GM23248 (cell line): ENCODE measurements at regions of chr7 and their contacts with region 1.

Region 1: GRCh38 chr7:85023045-85023712 is 163.7 kb downstream of the SEMA3D start:
- DNase-seq: peak; percentile 65
- H3K4me3 ChIP-seq: no peak overlapping the region
- H3K27ac ChIP-seq: no peak overlapping the region
- H3K4me1 ChIP-seq: no peaks in the 10 kb centered on the region
- H3K27me3 ChIP-seq: no peaks in the 10 kb centered on the region

Region 2: DNA sequence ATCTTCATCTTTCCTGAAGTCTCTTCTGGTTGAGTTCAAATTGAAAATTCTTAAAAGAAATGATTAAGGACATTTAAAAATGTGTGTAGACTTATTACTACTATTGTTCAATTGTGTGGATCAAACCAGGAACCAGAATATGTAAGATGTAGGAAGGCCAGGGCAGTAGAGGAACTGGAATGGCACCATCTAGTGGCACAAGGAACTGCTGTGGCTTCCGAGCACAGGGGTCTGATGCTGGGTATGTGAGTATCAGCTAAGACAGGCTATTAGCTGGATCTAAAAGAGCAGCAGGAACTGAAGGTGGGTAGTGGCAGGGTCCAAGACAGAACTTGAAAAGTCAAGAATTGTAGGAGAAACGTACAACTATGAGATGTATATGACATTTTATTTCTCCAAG is 1075.9 kb before region 1 on chr7:
- in situ Hi-C with region 1: loop called (anchors 10 kb)
- DNase-seq: peak; percentile 22
- H3K4me3 ChIP-seq: no peak overlapping the region
- H3K27ac ChIP-seq: no peak overlapping the region
- H3K4me1 ChIP-seq: no peaks in the 10 kb centered on the region
- H3K27me3 ChIP-seq: no peaks in the 10 kb centered on the region

Region 3: DNA sequence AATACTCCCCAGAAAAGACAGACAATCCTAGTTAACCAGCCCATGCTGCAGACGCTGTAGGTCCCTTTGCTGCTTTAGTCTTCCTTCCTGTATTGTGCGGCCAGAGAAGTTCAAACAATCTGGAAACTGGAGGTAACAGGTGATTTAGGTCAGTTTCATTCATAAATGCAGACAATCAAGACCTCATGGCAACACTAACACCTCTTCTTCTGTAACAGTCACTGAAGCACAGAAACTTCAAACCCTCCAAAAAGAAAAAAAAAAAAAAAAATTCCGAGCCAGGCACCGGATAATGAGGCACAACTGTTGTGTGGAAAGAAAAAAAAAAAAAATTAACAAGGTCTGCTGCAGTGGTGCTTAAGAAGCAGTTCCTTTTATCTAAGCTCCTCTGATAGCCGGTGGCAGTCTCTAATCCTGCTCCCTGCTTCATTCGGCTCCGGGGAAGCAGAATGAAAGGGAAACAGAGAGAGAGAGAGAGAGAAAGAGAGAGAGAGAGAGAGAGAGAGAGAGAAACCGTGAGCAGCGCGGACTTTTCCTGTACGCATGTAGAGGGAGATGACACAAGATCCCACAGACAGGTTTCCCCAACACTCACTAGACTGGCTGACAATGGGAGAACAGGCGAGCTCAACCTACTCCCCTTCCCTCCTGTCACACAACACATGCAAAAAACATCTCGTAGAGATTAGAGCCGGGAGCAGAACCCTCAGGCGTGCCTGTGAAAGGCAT is 828.5 kb before region 1 on chr7 and contains the start of gene SEMA3A:
- in situ Hi-C with region 1: loop called (anchors 10 kb)
- DNase-seq: peak; percentile 84
- H3K4me3 ChIP-seq: peak within 1 kb of the TSS; percentile 92
- H3K27ac ChIP-seq: peak within 1 kb of the TSS; percentile 47
- H3K4me1 ChIP-seq: peaks cover 45% of the 10 kb centered on the region
- H3K27me3 ChIP-seq: no peaks in the 10 kb centered on the region
- total RNA-seq, gene SEMA3A: 36.5 and 48.4 TPM in 2 replicates

Region 4: GRCh38 chr7:84975586-84976185 is 47.5 kb before region 1 on chr7:
- in situ Hi-C with region 1: no loop called
- DNase-seq: peak; percentile 63
- H3K4me3 ChIP-seq: 0 out of 2 replicates have a peak overlapping the region, but pooled peaks have one; percentile 1
- H3K27ac ChIP-seq: no peak overlapping the region
- H3K4me1 ChIP-seq: peaks cover 8% of the 10 kb centered on the region
- H3K27me3 ChIP-seq: no peaks in the 10 kb centered on the region